ENCODE measurements at regions of chr16 and their contacts with region 1.

Region 1: GRCh38 chr16:81808933-81809496 is 29.9 kb downstream of the PLCG2 start:
- DNase-seq: peak; percentile 99
- ATAC-seq: peak; percentile 75
- H3K4me3 ChIP-seq: peak overlapping the region; percentile 48; the same call in 1 of the 2 replicates
- H3K27ac ChIP-seq: peak overlapping the region; percentile 99
- H3K4me1 ChIP-seq: peaks cover 78% of the 10 kb centered on the region
- H3K27me3 ChIP-seq: no peaks in the 10 kb centered on the region
- CTCF ChIP-seq: no peak
- EP300 ChIP-seq: peak; percentile 98
- POLR2A ChIP-seq: peak; percentile 61
- RAD21 ChIP-seq: peak; percentile 9; the same call in 1 of the 2 replicates

Region 2: DNA sequence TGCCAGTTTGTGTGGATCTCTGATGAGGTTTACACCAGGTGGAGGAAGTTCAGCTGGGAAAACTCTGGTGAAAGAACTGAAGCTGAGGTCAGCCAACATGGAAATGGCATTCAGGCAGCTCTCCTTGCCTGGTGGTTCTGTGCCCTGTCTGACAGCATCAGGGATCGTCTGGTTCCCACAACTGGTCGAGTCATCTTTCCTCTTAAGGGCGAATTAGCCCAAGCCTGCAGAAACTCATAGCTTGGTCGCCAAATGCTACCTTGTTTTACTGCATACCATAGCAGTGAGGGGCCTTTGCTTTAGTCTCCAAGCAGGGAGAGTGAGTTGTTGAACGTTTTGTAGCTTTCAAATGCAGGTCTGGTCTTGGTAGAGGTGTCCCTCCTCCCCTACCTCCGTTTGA is 22.7 kb before region 1 on chr16:
- CTCF ChIA-PET with region 1: interaction called, 9 read pairs
- POLR2A ChIA-PET with region 1: interaction called, 21 read pairs
- RAD21 ChIA-PET with region 1: interaction called, 28 read pairs
- SMC1A ChIA-PET with region 1: interaction called, 14 read pairs
- in situ Hi-C with region 1: no loop called
- intact Hi-C with region 1: loop called (anchors 2 kb)
- DNase-seq: no peak
- ATAC-seq: no peak
- H3K4me3 ChIP-seq: peak overlapping the region; percentile 75
- H3K27ac ChIP-seq: peak overlapping the region; percentile 60
- H3K4me1 ChIP-seq: peaks cover 42% of the 10 kb centered on the region
- H3K27me3 ChIP-seq: no peaks in the 10 kb centered on the region
- CTCF ChIP-seq: no peak
- EP300 ChIP-seq: no peak
- POLR2A ChIP-seq: no peak
- RAD21 ChIP-seq: no peak

Region 3: DNA sequence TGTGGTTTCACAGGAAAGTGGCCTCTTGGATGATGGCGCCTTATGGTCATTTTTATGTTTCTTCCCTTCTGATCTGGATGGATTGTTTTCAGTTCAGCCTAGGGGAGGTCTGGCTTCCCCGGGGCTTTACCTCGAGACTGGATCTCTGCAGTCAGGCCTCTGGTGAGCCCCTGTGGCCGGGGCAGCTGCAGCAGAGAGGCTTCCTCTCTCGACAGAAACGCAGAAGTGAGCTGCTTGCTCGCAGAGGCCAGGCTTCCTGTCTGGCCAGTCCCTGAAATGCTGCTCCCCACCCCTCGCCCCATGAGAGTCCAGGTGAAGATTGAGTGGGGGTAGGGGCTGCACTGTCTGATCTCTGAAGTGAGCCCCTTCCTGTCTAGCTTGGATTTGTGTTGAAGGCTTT is 14.1 kb after region 1 on chr16:
- CTCF ChIA-PET with region 1: interaction called, 30 read pairs
- POLR2A ChIA-PET with region 1: interaction called, 34 read pairs
- RAD21 ChIA-PET with region 1: interaction called, 39 read pairs
- SMC1A ChIA-PET with region 1: interaction called, 135 read pairs
- in situ Hi-C with region 1: no loop called
- intact Hi-C with region 1: no loop called
- DNase-seq: no peak
- ATAC-seq: peak; percentile 72
- H3K4me3 ChIP-seq: peak overlapping the region; percentile 71
- H3K27ac ChIP-seq: peak overlapping the region; percentile 98
- H3K4me1 ChIP-seq: peaks cover 86% of the 10 kb centered on the region
- H3K27me3 ChIP-seq: no peaks in the 10 kb centered on the region
- CTCF ChIP-seq: peak; percentile 4 to 42 (median 11); a peak in 2 of 6 replicates
- EP300 ChIP-seq: peak; percentile 23 to 60; a peak in 3 of 4 replicates
- POLR2A ChIP-seq: peak; percentile 80
- RAD21 ChIP-seq: peak; percentile 53

Region 4: GRCh38 chr16:81838794-81839193 is 29.8 kb after region 1 on chr16:
- CTCF ChIA-PET with region 1: interaction called, 9 read pairs
- POLR2A ChIA-PET with region 1: interaction called, 7 read pairs
- RAD21 ChIA-PET with region 1: interaction called, 31 read pairs
- SMC1A ChIA-PET with region 1: interaction called, 135 read pairs
- in situ Hi-C with region 1: no loop called
- intact Hi-C with region 1: no loop called
- DNase-seq: peak; percentile 57
- ATAC-seq: peak; percentile 64
- H3K4me3 ChIP-seq: no peak overlapping the region
- H3K27ac ChIP-seq: peak overlapping the region; percentile 54
- H3K4me1 ChIP-seq: peaks cover 87% of the 10 kb centered on the region
- H3K27me3 ChIP-seq: no peaks in the 10 kb centered on the region
- CTCF ChIP-seq: no peak
- EP300 ChIP-seq: peak; percentile 26 to 53; a peak in 2 of 4 replicates
- POLR2A ChIP-seq: peak; percentile 44; the same call in 1 of the 2 replicates
- RAD21 ChIP-seq: no peak

Region 5: DNA sequence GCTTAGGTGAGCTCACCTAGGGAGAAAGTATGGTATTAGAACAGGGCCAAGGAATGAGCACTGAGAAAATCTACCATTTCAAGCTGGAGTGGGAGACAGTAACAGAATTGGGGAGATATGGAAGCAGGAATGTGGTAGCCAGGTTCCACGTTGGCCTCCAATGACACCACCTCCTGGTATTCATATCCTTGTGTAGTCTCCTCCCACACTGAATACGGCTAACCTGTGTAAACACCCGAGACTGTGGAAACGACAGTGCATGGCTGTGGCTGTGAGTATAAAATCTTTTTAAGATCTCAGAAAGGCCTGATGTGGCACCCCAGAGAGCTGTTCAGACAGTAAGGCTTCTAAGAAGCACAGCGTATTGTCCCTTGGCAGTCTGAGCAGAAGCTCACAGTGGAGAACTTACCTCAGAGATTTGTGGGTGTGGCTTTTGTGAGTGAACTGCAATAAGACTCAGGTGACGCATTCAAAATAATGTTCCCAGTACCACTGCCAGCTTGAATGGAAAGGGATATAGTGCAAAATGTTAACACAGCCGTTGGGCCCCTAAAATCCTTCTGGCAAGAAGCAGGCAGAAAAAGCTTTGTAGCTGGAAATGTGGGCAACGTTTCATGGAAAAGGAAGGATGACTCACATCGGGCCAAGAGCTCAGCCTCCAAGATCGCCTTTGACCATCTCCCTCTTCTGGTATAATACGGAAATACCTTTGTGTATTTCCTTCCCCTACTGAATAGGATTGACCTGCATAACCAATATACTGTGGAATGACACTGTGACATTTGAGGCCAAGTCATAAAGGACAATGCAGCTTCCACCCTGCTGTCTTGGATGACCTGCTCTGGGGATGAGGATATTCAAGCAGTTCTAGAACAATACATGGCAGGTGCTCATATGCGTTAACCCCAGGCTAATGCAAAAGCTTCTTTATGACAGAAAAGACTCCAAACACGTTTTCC is 187.9 kb after region 1 on chr16:
- CTCF ChIA-PET with region 1: no interaction called
- POLR2A ChIA-PET with region 1: no interaction called
- RAD21 ChIA-PET with region 1: no interaction called
- SMC1A ChIA-PET with region 1: no interaction called
- in situ Hi-C with region 1: no loop called
- intact Hi-C with region 1: no loop called
- DNase-seq: no peak
- ATAC-seq: no peak
- H3K4me3 ChIP-seq: no peak overlapping the region
- H3K27ac ChIP-seq: no peak overlapping the region
- H3K4me1 ChIP-seq: no peaks in the 10 kb centered on the region
- H3K27me3 ChIP-seq: no peaks in the 10 kb centered on the region
- CTCF ChIP-seq: no peak
- EP300 ChIP-seq: no peak
- POLR2A ChIP-seq: no peak
- RAD21 ChIP-seq: no peak

Region 6: DNA sequence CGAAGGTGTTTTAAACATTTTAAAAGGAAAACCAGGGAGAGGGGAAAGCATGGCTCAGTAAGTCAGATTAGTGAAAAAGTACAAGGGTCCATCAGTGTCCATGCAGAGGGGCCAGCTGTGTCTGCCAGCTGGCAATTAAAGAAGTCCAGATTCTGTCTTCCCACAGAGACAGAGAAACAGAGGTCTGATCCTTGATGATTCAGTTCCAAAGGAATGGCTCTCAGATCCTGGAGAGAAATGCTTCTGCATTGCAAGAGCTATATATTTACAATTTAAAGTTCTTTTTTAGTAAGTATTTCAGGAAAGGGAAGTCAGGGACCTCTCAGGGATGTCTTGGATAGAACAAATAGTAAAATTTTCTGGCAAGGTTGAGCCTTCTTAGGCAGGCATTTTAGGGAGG is 282.2 kb after region 1 on chr16:
- CTCF ChIA-PET with region 1: no interaction called
- POLR2A ChIA-PET with region 1: no interaction called
- RAD21 ChIA-PET with region 1: no interaction called
- SMC1A ChIA-PET with region 1: no interaction called
- in situ Hi-C with region 1: no loop called
- intact Hi-C with region 1: no loop called
- DNase-seq: no peak
- ATAC-seq: no peak
- H3K4me3 ChIP-seq: no peak overlapping the region
- H3K27ac ChIP-seq: no peak overlapping the region
- H3K4me1 ChIP-seq: no peaks in the 10 kb centered on the region
- H3K27me3 ChIP-seq: no peaks in the 10 kb centered on the region; a peak in 2 of 4 replicates
- CTCF ChIP-seq: no peak
- EP300 ChIP-seq: no peak
- POLR2A ChIP-seq: no peak
- RAD21 ChIP-seq: no peak